ENCODE measurements at regions of chr2 and their contacts with region 1.

Region 1: GRCh38 chr2:221573430-221574230 is 1.5 kb upstream of the EPHA4 start:
- DNase-seq: peak in 1 of 2 donors; percentile 93
- H3K4me3 ChIP-seq: peak overlapping the region; percentile 77 to 92
- H3K27ac ChIP-seq: peak overlapping the region; percentile 83 to 88
- H3K4me1 ChIP-seq: peaks cover 7 to 13% of the 10 kb centered on the region in 2 donors
- H3K27me3 ChIP-seq: no peaks in the 10 kb centered on the region
- CTCF ChIP-seq: peak; percentile 97 to 99 (median 98)

Region 2: GRCh38 chr2:219736209-219736608 is 1837.4 kb before region 1 on chr2:
- intact Hi-C with region 1: loop called (anchors 10 kb)
- DNase-seq: no peak
- H3K4me3 ChIP-seq: no peak overlapping the region
- H3K27ac ChIP-seq: no peak overlapping the region
- H3K4me1 ChIP-seq: no peaks in the 10 kb centered on the region
- H3K27me3 ChIP-seq: no peaks in the 10 kb centered on the region
- CTCF ChIP-seq: peak in 2 of 3 experiments; percentile 46 to 56

Region 3: DNA sequence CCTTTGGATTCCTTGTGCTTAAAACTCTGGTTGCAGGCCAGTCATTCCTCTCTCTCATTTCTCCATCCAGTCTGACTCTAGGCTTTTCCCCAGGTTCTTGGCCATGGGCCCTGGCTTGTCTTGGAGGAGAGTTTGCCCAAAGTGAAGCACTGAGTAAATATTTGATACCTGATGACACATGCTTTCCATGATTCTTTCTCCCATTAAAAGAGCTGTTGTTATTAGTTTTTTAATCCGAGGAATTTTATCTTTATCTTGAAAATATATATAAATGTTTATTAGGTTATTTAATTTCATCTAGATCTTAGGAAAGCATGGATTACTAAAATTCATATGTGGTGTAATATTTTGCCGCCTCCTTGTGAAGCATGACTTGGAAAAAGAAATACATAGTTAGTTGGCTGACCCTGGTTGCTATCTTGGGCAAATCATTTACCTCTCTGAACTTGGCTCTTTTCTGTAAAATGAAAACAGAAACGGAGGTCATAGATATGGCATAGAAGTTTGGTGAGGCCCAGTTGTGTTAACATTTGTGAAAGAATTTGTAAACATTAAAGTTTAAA is 1296.1 kb before region 1 on chr2:
- intact Hi-C with region 1: loop called (anchors 2 kb)
- DNase-seq: peak; percentile 16 to 87
- H3K4me3 ChIP-seq: no peak overlapping the region
- H3K27ac ChIP-seq: peak overlapping the region; percentile 55 to 64
- H3K4me1 ChIP-seq: peaks cover 0 to 15% of the 10 kb centered on the region in 2 donors
- H3K27me3 ChIP-seq: no peaks in the 10 kb centered on the region
- CTCF ChIP-seq: no peak

Region 4: GRCh38 chr2:220962556-220962955 is 611.1 kb before region 1 on chr2:
- intact Hi-C with region 1: loop called (anchors 5 kb)
- DNase-seq: no peak
- H3K4me3 ChIP-seq: no peak overlapping the region
- H3K27ac ChIP-seq: no peak overlapping the region
- H3K4me1 ChIP-seq: peaks cover 0 to 6% of the 10 kb centered on the region in 2 donors
- H3K27me3 ChIP-seq: no peaks in the 10 kb centered on the region
- CTCF ChIP-seq: no peak

Region 5: DNA sequence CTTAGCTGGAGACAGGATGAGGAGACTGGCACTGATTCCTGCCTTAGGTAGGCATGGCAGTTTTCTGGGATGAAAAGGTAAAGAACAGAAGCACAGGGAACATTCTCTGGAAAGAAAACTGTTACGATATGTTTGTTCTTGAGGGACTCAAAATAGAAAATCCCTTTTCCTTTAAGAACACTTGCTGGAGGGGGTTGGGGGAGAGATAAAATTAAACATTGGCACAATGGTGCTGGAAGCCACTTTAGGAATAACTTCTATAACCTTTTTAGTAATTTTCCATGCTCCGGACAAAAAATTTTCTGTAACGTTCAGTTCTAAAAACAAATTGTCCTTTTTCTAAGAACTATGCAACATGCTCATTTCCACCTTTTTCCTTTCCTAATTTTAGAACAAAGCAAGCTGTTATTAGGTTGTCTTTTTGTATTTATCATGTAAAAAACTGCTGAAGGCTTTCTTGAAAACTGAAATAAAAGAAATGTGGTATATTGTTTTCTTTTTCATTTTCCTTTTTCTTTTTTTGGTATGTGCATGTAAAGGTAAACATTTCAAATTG is 345.3 kb before region 1 on chr2:
- intact Hi-C with region 1: loop called (anchors 5 kb)
- DNase-seq: no peak
- H3K4me3 ChIP-seq: peak overlapping the region in 1 of 2 donors; percentile 19
- H3K27ac ChIP-seq: peak overlapping the region; percentile 76 to 84
- H3K4me1 ChIP-seq: peaks cover 0 to 15% of the 10 kb centered on the region in 2 donors
- H3K27me3 ChIP-seq: no peaks in the 10 kb centered on the region
- CTCF ChIP-seq: no peak

Region 6: DNA sequence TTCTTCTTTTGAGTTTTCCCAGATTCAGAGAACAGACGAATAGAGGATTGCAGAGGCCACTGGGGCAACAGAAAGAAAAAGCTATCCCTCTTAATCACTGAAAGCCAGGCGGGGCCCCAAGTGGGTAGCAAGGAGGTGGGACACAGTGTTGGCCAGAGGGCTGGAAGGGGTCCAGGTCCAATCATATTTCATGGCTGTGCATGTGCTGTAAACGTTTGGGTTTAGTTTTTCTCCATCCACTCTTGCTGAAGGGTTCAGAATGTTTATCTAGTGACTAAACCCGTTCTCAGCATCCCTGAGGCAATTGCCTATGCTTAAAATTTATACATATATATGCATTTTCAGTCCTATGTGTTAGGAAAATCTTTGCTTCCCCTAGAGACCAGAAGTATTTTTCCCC is 97.9 kb after region 1 on chr2:
- intact Hi-C with region 1: no loop called
- DNase-seq: no peak
- H3K4me3 ChIP-seq: no peak overlapping the region
- H3K27ac ChIP-seq: no peak overlapping the region
- H3K4me1 ChIP-seq: no peaks in the 10 kb centered on the region
- H3K27me3 ChIP-seq: no peaks in the 10 kb centered on the region
- CTCF ChIP-seq: no peak

Region 7: GRCh38 chr2:221943076-221943810 is 369.6 kb after region 1 on chr2:
- intact Hi-C with region 1: loop called (anchors 5 kb)
- DNase-seq: peak in 1 of 2 donors; percentile 85
- H3K4me3 ChIP-seq: no peak overlapping the region
- H3K27ac ChIP-seq: peak overlapping the region; percentile 44 to 74
- H3K4me1 ChIP-seq: peaks cover 0 to 14% of the 10 kb centered on the region in 2 donors
- H3K27me3 ChIP-seq: no peaks in the 10 kb centered on the region
- CTCF ChIP-seq: no peak

Measured in ascending aorta (tissue), 2 donors.